HEK293 (cell line): ENCODE measurements at regions of chr7 and their contacts with region 1.

Region 1: DNA sequence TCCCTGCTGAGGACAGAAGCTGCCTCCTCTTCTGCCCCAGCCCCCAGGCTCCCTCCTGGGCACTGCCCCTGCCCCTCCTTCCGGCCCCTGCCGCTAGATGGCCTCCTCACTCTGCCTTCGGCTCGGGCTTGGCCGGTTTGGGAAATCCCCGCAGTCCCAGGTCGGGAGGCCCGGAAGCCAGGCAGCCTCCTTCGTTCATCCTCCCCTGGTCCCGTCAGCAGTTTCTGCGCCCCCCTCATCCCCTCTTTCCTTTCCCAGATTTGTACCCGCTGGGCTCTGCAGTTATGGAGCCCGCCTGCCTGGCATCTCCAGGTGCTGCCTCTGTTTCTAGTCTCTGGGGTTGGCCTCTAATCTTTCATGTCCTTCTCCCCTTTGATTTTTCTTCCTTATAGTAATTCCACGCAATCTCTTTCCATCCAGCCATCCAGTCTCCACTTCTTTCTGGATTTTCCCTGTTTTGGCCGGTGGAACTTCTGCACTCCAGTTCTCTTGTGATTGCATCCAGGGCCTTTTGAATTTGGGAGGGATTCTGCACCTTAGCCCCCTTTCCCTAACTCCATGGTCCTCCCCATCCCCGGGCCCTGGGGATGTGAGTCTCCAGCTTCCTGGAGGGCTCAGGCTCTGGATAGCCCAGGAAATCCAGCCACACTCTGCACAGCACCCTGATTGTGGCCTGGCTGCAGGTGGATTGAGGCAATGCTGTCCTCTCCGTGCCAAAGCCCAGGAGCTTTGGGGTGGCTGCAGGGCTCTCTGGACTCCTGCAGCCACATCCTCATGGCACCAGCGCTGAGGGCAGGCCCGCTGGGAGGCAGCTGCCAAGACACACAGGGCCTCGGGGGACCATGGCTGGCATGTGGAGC is 3.3 kb upstream of the SHH start:
- H3K4me3 ChIP-seq: no peak overlapping the region
- H3K27ac ChIP-seq: no peak overlapping the region
- H3K4me1 ChIP-seq: peaks cover 2% of the 10 kb centered on the region; the same call in 1 of the 2 replicates
- CTCF ChIP-seq: peak; percentile 77

Region 2: DNA sequence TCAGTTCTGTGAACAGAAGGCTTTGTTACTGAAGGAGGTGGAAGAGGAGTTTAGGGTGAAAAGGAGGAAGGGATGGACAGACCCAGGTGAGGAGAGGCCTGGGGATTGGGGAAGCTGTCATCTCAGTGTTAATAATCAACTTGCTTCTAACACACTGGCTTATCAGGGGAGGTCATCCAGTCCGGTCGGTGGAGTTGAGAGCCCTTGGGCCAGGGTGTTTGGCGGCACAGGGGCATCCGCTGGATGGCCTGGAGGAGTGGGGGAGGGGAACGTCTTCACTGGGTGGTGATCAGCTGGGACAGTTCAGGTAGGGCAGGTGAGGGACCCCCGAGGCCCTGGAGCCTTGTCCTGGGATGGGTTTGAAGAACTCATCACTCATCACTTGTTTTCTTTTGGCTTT is 37.2 kb before region 1 on chr7:
- CTCF ChIA-PET with region 1: no interaction called
- POLR2A ChIA-PET with region 1: no interaction called
- H3K4me3 ChIP-seq: no peak overlapping the region
- H3K27ac ChIP-seq: no peak overlapping the region
- H3K4me1 ChIP-seq: no peaks in the 10 kb centered on the region
- CTCF ChIP-seq: no peak

Region 3: GRCh38 chr7:155831807-155832524 is 16.4 kb after region 1 on chr7:
- CTCF ChIA-PET with region 1: no interaction called
- POLR2A ChIA-PET with region 1: no interaction called
- H3K4me3 ChIP-seq: no peak overlapping the region
- H3K27ac ChIP-seq: no peak overlapping the region
- H3K4me1 ChIP-seq: no peaks in the 10 kb centered on the region
- CTCF ChIP-seq: no peak

Region 4: DNA sequence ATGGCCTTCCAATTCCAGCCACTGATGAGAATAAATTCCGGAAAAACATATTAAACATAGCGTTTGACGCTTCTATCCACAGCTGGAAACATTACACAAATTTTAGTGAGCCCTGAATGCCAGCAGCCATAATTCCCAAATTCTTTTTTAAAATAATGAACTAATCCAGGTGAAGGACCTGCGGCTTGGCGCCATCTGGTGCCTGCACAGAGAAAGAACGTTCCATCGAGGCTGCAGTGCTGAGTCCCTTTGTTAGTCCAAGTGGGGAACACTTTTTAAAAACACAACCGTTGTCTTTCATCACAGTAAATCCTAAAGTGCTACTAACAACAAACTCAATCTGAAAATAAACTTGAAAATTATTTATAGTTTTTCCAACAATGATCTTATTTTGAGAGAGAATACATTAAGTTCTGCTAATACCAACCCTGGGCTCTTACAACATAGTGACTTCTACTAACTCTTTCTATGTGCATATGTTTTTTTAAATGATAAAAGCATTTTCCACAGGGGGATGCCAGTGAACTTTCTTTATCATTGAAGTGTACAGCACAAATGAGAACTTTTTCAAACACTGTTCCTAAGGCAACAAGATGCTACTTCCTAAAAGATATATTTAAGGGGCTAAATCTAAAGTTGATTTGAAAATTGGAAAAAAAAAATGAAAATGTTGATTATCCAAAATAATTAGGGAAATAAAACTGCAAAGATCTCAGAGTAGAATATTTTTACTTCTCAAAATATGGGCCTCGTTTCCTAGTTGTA is 658.1 kb after region 1 on chr7:
- CTCF ChIA-PET with region 1: interaction called, 16 read pairs
- POLR2A ChIA-PET with region 1: no interaction called
- H3K4me3 ChIP-seq: no peak overlapping the region
- H3K27ac ChIP-seq: no peak overlapping the region
- H3K4me1 ChIP-seq: no peaks in the 10 kb centered on the region
- CTCF ChIP-seq: peak; percentile 13; the same call in 1 of the 2 replicates